ENCODE measurements at regions of chr7 and their contacts with region 1.

Region 1: GRCh38 chr7:95476904-95477594 is 8.7 kb upstream of the ASB4 start:
- DNase-seq: peak; percentile 74
- H3K4me3 ChIP-seq: no peak overlapping the region
- H3K4me3 Mint-ChIP-seq: no peak overlapping the region
- H3K27ac Mint-ChIP-seq: no peak overlapping the region
- H3K4me1 ChIP-seq: peaks cover 20% of the 10 kb centered on the region
- H3K4me1 Mint-ChIP-seq: peaks cover 11% of the 10 kb centered on the region
- H3K27me3 ChIP-seq: no peaks in the 10 kb centered on the region
- H3K27me3 Mint-ChIP-seq: no peaks in the 10 kb centered on the region
- CTCF ChIP-seq: peak; percentile 71 to 82

Region 2: DNA sequence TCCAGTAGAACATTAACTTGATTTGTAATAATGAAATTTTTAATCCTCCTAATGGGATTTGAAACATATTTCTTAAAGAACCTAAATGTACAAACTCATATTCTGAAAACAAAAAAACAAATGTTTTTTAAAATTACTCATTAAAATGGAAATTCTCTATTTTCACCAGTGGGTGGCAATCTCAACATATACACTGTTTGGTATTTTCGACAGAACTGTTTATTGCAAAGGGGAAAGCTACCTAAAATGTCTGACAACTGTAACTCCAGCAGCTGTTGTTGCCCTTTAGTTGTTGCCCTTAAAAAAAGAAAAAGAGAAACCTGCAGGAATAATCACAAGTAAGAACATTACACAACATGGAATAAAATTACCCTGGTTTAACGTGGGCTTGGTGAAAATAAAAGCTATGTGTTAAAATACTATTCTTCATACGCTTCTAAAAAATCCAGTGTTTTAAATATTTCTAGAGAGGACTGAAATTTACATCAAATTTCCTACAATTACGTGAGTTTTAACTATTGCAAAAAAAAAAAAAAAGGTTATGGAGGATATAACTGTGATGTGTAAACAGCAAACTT is 1027.8 kb before region 1 on chr7:
- CTCF ChIA-PET with region 1: no interaction called
- POLR2A ChIA-PET with region 1: no interaction called
- intact Hi-C with region 1: loop called (anchors 5 kb)
- DNase-seq: peak in 1 of 2 experiments; percentile 24
- H3K4me3 ChIP-seq: no peak overlapping the region
- H3K4me3 Mint-ChIP-seq: no peak overlapping the region
- H3K27ac Mint-ChIP-seq: no peak overlapping the region
- H3K4me1 ChIP-seq: peaks cover 15% of the 10 kb centered on the region; the same call in 1 of the 2 replicates
- H3K4me1 Mint-ChIP-seq: peaks cover 19% of the 10 kb centered on the region
- H3K27me3 ChIP-seq: no peaks in the 10 kb centered on the region
- H3K27me3 Mint-ChIP-seq: no peaks in the 10 kb centered on the region
- CTCF ChIP-seq: peak; percentile 52 to 53

Region 3: GRCh38 chr7:95045236-95045923 is 431.7 kb before region 1 on chr7:
- CTCF ChIA-PET with region 1: no interaction called
- POLR2A ChIA-PET with region 1: no interaction called
- intact Hi-C with region 1: loop called (anchors 10 kb)
- DNase-seq: peak; percentile 63
- H3K4me3 ChIP-seq: no peak overlapping the region
- H3K4me3 Mint-ChIP-seq: no peak overlapping the region
- H3K27ac Mint-ChIP-seq: no peak overlapping the region
- H3K4me1 ChIP-seq: peaks cover 5% of the 10 kb centered on the region; the same call in 1 of the 2 replicates
- H3K4me1 Mint-ChIP-seq: no peaks in the 10 kb centered on the region
- H3K27me3 ChIP-seq: no peaks in the 10 kb centered on the region
- H3K27me3 Mint-ChIP-seq: no peaks in the 10 kb centered on the region
- CTCF ChIP-seq: peak; percentile 17 to 59

Region 4: DNA sequence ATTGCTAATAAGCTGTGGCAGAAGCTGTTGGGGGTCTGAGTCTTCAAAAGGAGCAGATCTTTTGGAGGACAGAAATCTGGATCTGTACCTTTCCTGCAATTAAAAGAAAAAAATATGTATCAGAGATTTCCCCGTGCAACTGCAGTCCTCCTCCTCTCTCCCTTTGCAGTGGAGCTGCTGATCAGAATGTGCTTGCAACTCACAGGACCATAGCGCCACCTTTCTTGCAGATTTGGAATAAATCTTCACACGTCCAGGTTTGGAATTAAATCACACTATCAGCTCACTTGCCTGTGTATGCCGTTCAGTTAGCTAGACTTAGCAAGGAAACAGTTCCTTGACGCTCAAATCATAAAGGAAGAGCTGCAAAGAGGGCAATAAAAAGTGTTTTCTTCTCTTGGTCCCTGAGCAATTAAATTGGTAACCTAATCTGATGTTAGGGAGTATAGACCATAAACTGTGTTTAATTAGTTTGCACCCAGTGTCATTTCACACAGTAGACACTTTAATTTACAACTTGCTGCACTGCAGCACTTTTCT is 230.1 kb before region 1 on chr7:
- CTCF ChIA-PET with region 1: interaction called, 3 read pairs
- POLR2A ChIA-PET with region 1: no interaction called
- intact Hi-C with region 1: loop called (anchors 5 kb)
- DNase-seq: peak; percentile 62 to 69
- H3K4me3 ChIP-seq: no peak overlapping the region
- H3K4me3 Mint-ChIP-seq: no peak overlapping the region
- H3K27ac Mint-ChIP-seq: no peak overlapping the region
- H3K4me1 ChIP-seq: no peaks in the 10 kb centered on the region
- H3K4me1 Mint-ChIP-seq: no peaks in the 10 kb centered on the region
- H3K27me3 ChIP-seq: no peaks in the 10 kb centered on the region
- H3K27me3 Mint-ChIP-seq: no peaks in the 10 kb centered on the region
- CTCF ChIP-seq: peak; percentile 71 to 77

Region 5: DNA sequence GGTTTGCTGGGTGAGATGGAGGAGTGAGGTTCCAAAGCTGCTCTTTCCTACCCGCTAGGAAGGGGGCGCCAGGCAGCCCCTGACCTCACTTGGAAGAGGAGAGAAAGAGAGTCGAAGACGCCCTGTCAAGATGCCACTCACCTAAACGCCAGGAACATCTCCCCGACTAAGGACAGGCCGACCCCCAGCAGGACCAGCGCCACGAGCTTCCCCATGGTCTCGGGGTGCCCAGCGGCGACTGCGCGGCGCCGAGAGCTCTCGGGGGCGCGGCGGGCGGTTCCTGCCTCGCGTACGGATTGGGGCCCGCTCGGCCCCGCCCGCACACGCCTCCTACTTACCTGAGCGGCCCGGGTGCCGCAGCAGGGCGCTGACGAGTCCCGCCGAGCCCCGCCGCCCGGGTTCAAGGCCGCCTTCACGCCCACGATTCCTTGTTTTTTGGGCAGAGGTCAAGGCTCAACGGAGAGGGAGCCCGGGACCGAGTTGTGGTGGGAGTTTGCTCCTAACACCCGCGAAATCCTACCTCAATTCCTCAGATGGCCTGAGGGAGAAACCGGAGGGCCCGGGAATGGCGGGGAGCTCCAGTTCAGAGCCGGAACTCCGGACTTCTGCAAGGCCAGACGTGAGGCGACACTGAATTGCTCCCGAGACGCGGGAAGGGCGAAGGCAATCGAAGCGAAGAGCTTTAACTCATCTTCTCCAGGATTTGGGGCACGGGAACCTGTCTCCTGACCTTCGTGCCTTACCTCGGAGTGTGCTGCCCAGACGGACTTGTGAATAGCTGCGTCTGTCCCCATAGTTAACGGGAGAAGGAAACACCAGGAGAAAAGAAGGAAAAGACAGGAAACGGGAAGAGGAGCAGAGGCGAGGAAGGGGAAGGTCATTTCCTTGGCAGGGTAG is 80.7 kb before region 1 on chr7 and contains the start of gene PON3:
- CTCF ChIA-PET with region 1: interaction called, 70 read pairs
- POLR2A ChIA-PET with region 1: interaction called, 3 read pairs
- intact Hi-C with region 1: loop called (anchors 1 kb)
- DNase-seq: peak; percentile 73 to 81
- H3K4me3 ChIP-seq: peak within 1 kb of the TSS; percentile 83
- H3K4me3 Mint-ChIP-seq: peak within 1 kb of the TSS; percentile 82
- H3K27ac Mint-ChIP-seq: peak within 1 kb of the TSS; percentile 63
- H3K4me1 ChIP-seq: peaks cover 9% of the 10 kb centered on the region; the same call in 1 of the 2 replicates
- H3K4me1 Mint-ChIP-seq: peaks cover 11% of the 10 kb centered on the region
- H3K27me3 ChIP-seq: no peaks in the 10 kb centered on the region
- H3K27me3 Mint-ChIP-seq: no peaks in the 10 kb centered on the region
- CTCF ChIP-seq: peak; percentile 75 to 87
- total RNA-seq, gene PON3: 13.4 and 15.0 TPM in 2 replicates

Region 6: DNA sequence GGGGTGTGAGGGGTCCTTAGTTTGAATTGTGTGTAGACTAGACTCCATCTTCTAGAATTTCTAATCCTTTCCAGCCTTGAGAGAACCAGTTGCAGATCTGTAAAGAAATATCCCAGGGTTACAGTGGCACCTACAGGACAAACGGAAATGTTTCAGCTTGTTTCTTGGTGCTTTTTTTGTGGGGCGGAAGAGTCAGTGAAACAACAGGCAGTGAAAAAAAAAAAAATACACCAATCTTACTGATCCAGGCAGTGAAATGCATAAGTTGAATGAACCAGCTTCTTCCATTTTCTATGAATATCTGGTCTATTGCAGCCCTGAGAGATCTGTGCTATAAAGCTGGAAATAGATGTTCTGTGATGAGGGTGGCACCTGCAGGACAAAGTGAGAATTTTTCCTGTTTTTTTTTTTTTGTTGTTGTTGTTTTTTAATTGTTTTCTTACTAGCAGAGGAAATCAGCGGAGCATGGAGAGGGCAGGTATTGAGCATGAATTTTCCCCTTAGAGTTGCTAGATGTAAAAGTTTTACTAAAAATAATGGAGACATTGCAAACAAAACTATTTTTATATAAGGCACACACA is 213.4 kb after region 1 on chr7:
- CTCF ChIA-PET with region 1: interaction called, 7 read pairs
- POLR2A ChIA-PET with region 1: no interaction called
- intact Hi-C with region 1: loop called (anchors 1 kb)
- DNase-seq: peak in 1 of 2 experiments; percentile 54
- H3K4me3 ChIP-seq: no peak overlapping the region
- H3K4me3 Mint-ChIP-seq: peak overlapping the region; percentile 34
- H3K27ac Mint-ChIP-seq: no peak overlapping the region
- H3K4me1 ChIP-seq: no peaks in the 10 kb centered on the region
- H3K4me1 Mint-ChIP-seq: peaks cover 5% of the 10 kb centered on the region
- H3K27me3 ChIP-seq: no peaks in the 10 kb centered on the region
- H3K27me3 Mint-ChIP-seq: no peaks in the 10 kb centered on the region
- CTCF ChIP-seq: peak; percentile 53 to 90